Psoas muscle (tissue), 8 donors: ENCODE measurements at regions of chr11 and their contacts with region 1.

Region 1: GRCh38 chr11:66408488-66409214 is 12.2 kb upstream of the NPAS4 start:
- DNase-seq: peak; percentile 88 to 93
- ATAC-seq: peak; percentile 88 to 98 (median 96)
- H3K4me3 ChIP-seq: peak overlapping the region; percentile 59
- H3K27ac ChIP-seq: no peak overlapping the region
- H3K4me1 ChIP-seq: peaks cover 6% of the 10 kb centered on the region
- H3K27me3 ChIP-seq: peaks cover 0 to 12% (median 3%) of the 10 kb centered on the region in 3 donors
- CTCF ChIP-seq: peak; percentile 100

Region 2: GRCh38 chr11:66429983-66430602 is 21.4 kb after region 1 on chr11:
- intact Hi-C with region 1: loop called in 1 of 2 experiments (anchors 1 kb)
- DNase-seq: peak; percentile 62 to 82
- ATAC-seq: peak; percentile 73 to 90 (median 84)
- H3K4me3 ChIP-seq: no peak overlapping the region
- H3K27ac ChIP-seq: no peak overlapping the region
- H3K4me1 ChIP-seq: no peaks in the 10 kb centered on the region
- H3K27me3 ChIP-seq: no peaks in the 10 kb centered on the region
- CTCF ChIP-seq: peak; percentile 70

Region 3: GRCh38 chr11:66438504-66439466 is 30.1 kb after region 1 on chr11 and contains the start of gene MRPL11:
- intact Hi-C with region 1: loop called (anchors 5 kb)
- DNase-seq: peak; percentile 90 to 94
- ATAC-seq: peak; percentile 100
- H3K4me3 ChIP-seq: peak within 1 kb of the TSS; percentile 97
- H3K27ac ChIP-seq: peak within 1 kb of the TSS; percentile 89
- H3K4me1 ChIP-seq: peaks cover 8% of the 10 kb centered on the region
- H3K27me3 ChIP-seq: no peaks in the 10 kb centered on the region
- CTCF ChIP-seq: peak; percentile 57
- total RNA-seq, gene MRPL11: 37.0 to 57.4 (median 48.7) TPM

Region 4: DNA sequence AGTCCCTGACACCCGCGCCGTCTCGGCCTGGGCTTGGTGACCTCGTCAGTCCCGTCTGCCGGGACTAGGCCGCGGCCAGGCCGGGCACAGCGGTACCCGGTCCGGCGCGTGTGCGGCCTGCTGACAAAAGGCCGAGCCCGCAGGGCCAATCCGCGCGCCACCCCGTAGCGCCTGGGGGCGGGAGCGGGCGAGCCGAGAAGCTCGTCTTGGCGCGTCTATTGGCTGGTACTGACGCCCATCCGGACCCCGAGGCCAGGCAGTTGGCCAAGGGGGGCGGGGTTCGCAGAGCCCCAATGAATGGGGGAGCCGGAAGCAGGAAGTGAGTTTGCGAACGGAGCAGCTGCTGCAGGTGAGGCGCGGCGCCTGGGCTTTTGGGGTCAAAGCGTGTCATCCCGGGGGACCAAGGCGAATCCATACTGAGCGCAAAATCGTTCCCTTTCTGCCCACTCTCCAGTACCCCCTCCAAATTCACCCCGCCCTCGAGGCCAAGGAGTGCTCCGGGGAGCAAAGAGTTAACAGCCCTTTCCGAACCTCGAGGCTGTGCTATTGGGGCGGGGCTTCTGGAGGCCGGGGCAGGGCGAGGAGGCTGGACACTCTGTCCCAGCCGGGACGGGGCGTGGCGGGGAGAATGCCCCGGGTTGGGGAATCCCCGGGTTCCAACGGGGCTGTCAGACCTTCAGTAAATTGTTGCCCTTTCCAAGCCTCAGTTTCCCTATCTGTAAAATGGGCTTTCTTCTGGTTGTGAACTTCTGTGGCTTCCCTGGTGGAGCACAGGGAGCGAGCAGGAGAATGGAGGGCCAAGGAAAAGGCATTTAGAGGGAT is 71.7 kb after region 1 on chr11 and contains the start of gene DPP3:
- intact Hi-C with region 1: loop called in 1 of 2 experiments (anchors 5 kb)
- DNase-seq: peak; percentile 99
- ATAC-seq: peak; percentile 90 to 97 (median 94)
- H3K4me3 ChIP-seq: peak within 1 kb of the TSS; percentile 96
- H3K27ac ChIP-seq: peak within 1 kb of the TSS; percentile 95
- H3K4me1 ChIP-seq: peaks cover 24% of the 10 kb centered on the region
- H3K27me3 ChIP-seq: no peaks in the 10 kb centered on the region
- CTCF ChIP-seq: no peak
- total RNA-seq, gene DPP3: 24.0 to 44.4 (median 29.8) TPM

Region 5: DNA sequence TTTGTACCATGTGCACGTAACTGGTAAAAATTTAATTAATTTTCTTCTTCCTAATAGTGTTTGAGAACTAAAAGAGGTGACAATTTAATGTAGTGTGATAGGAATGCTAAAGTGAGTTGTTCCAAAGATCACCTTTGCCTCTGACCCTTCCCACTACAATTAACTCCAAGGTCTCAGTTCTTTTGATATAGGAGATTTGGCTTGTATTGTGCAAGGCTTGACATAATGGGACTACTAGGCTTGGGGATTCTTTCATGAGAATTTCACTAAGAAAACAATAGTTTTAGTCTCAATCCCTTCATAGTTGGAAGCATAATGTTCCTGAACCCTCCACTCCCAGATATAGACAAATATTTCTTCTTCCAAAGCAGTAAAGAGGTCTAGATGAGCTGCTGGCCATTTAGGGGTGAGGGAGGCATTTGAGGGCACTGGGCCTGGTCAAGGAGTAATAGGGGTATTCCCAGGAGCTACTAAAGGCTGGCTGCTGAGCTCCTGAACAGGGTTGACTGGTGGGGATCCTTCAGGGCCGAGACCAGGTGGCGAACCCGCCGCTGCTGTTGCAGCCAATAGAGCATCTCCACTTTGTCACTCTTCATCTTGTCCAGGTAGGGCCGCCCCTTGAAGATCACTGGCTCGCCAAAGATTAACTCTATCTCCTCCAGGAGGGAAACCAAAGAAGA is 181.5 kb after region 1 on chr11:
- intact Hi-C with region 1: no loop called
- DNase-seq: no peak
- ATAC-seq: no peak
- H3K4me3 ChIP-seq: no peak overlapping the region
- H3K27ac ChIP-seq: no peak overlapping the region
- H3K4me1 ChIP-seq: peaks cover 15% of the 10 kb centered on the region
- H3K27me3 ChIP-seq: no peaks in the 10 kb centered on the region
- CTCF ChIP-seq: no peak

Region 6: GRCh38 chr11:66677599-66678375 is 269.1 kb after region 1 on chr11 and contains the start of gene RBM4B:
- intact Hi-C with region 1: loop called (anchors 2 to 10 kb)
- DNase-seq: peak; percentile 98 to 99
- ATAC-seq: peak; percentile 96 to 98 (median 96)
- H3K4me3 ChIP-seq: peak within 1 kb of the TSS; percentile 86
- H3K27ac ChIP-seq: peak within 1 kb of the TSS; percentile 93
- H3K4me1 ChIP-seq: peaks cover 30% of the 10 kb centered on the region
- H3K27me3 ChIP-seq: no peaks in the 10 kb centered on the region
- CTCF ChIP-seq: no peak
- total RNA-seq, gene RBM4B: 3.6 to 11.0 (median 8.2) TPM

Region 7: DNA sequence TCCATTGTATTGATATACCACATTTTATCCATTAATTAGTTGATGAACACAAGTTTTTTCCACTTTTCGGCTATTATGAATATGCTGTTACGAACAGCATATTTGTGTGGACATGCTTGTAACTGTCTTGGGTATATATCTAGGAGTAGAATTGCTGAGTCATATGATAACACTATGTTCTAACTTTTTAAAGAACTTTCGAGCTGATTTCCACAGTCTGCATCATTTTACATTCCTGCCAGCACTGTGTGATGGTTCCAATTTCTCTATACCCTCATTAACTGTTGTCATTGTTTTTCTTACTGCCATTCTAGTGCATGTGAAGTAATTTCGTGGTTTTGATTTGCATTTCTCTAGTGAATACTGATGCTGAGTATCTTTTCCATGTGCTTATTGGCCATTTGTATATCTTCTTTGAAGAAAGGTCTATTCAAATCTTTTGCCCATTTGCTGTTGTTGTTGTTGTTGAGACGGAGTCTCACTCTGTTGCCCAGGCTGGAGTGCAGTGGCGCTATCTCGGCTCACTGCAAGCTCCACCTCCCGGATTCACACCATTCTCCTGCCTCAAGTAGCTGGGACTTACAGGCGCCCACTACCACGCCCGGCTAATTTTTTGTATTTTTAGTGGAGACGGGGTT is 427.2 kb after region 1 on chr11:
- intact Hi-C with region 1: loop called (anchors 2 to 5 kb)
- DNase-seq: no peak
- ATAC-seq: no peak
- H3K4me3 ChIP-seq: no peak overlapping the region
- H3K27ac ChIP-seq: no peak overlapping the region
- H3K4me1 ChIP-seq: no peaks in the 10 kb centered on the region
- H3K27me3 ChIP-seq: no peaks in the 10 kb centered on the region
- CTCF ChIP-seq: no peak